ENCODE measurements at regions of chr3 and their contacts with region 1.

Region 1: GRCh38 chr3:141875374-141875892 is 1.0 kb upstream of the ATP1B3 start:
- DNase-seq: peak; percentile 66 to 89 (median 77)
- ATAC-seq: peak; percentile 59 to 67 (median 61)
- H3K4me3 ChIP-seq: peak overlapping the region; percentile 85 to 90
- H3K4me3 Mint-ChIP-seq: peak overlapping the region; percentile 83 to 95 (median 91)
- H3K27ac ChIP-seq: peak overlapping the region; percentile 93
- H3K27ac Mint-ChIP-seq: peak overlapping the region; percentile 86 to 96
- H3K4me1 ChIP-seq: peaks cover 9 to 10% of the 10 kb centered on the region in 2 experiments
- H3K4me1 Mint-ChIP-seq: peaks cover 32 to 34% (median 33%) of the 10 kb centered on the region in 3 donors
- H3K27me3 ChIP-seq: no peaks in the 10 kb centered on the region
- H3K27me3 Mint-ChIP-seq: no peaks in the 10 kb centered on the region

Region 2: GRCh38 chr3:141738022-141738890 is 137.2 kb before region 1 on chr3 and contains the start of gene RNF7:
- CTCF ChIA-PET with region 1: interaction called, 3 to 20 read pairs
- POLR2A ChIA-PET with region 1: interaction called, 3 to 12 read pairs
- DNase-seq: peak; percentile 90 to 99 (median 97)
- ATAC-seq: peak; percentile 89 to 99 (median 92)
- H3K4me3 ChIP-seq: peak within 1 kb of the TSS; percentile 97
- H3K4me3 Mint-ChIP-seq: peak within 1 kb of the TSS; percentile 95 to 99 (median 95)
- H3K27ac ChIP-seq: peak within 1 kb of the TSS; percentile 94
- H3K27ac Mint-ChIP-seq: peak within 1 kb of the TSS; percentile 96 to 98
- H3K4me1 ChIP-seq: peaks cover 17 to 18% of the 10 kb centered on the region in 2 experiments
- H3K4me1 Mint-ChIP-seq: peaks cover 40 to 52% (median 43%) of the 10 kb centered on the region in 3 donors
- H3K27me3 ChIP-seq: no peaks in the 10 kb centered on the region
- H3K27me3 Mint-ChIP-seq: no peaks in the 10 kb centered on the region
- total RNA-seq, gene RNF7: 53.5 to 61.2 (median 55.5) TPM

Region 3: GRCh38 chr3:141796081-141796888 is 79.1 kb before region 1 on chr3:
- CTCF ChIA-PET with region 1: interaction called, 4 to 16 read pairs
- POLR2A ChIA-PET with region 1: interaction called in 1 of 2 experiments, 3 read pairs
- DNase-seq: peak in 34 of 35 experiments; percentile 11 to 74 (median 37)
- ATAC-seq: peak; percentile 78 to 84 (median 79)
- H3K4me3 ChIP-seq: peak overlapping the region; percentile 54 to 70
- H3K4me3 Mint-ChIP-seq: peak overlapping the region; percentile 88 to 90 (median 89)
- H3K27ac ChIP-seq: peak overlapping the region; percentile 91
- H3K27ac Mint-ChIP-seq: peak overlapping the region; percentile 99 to 100
- H3K4me1 ChIP-seq: peaks cover 28 to 57% of the 10 kb centered on the region in 2 experiments
- H3K4me1 Mint-ChIP-seq: peaks cover 56 to 67% (median 57%) of the 10 kb centered on the region in 3 donors
- H3K27me3 ChIP-seq: no peaks in the 10 kb centered on the region
- H3K27me3 Mint-ChIP-seq: no peaks in the 10 kb centered on the region

Region 4: DNA sequence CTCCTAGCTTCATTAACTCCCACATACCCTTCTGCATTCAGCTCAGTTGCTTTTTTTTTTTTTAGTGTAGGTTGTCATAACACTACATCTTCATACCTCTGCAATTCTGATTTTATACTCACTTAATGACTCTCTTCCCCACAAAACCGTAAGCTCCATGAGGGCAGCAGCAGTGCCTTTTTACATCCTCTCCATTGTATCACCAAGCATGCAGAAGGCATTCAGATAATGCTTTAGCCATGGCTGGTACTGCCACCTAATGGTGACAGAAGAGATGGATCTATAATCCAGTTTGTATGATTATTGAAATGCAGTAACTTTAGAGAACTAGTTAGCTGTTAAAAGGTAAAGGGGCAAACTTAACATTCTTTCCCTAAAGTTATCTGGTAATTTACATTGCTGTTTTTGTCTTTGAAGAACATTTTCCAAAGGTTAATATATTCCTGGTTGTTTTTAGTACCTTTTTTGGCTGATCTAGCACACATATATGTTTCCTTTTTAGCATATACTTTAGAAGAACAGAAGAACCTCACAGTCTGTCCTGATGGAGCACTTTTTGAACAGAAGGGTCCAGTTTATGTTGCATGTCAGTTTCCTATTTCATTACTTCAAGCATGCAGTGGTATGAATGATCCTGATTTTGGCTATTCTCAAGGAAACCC is 37.8 kb after region 1 on chr3:
- CTCF ChIA-PET with region 1: interaction called, 10 to 11 read pairs
- POLR2A ChIA-PET with region 1: no interaction called
- DNase-seq: peak in 33 of 35 experiments; percentile 5 to 76 (median 42)
- ATAC-seq: peak; percentile 73 to 83 (median 80)
- H3K4me3 ChIP-seq: no peak overlapping the region
- H3K4me3 Mint-ChIP-seq: no peak overlapping the region
- H3K27ac ChIP-seq: no peak overlapping the region
- H3K27ac Mint-ChIP-seq: no peak overlapping the region
- H3K4me1 ChIP-seq: no peaks in the 10 kb centered on the region
- H3K4me1 Mint-ChIP-seq: peaks cover 0 to 2% (median 2%) of the 10 kb centered on the region in 3 donors
- H3K27me3 ChIP-seq: no peaks in the 10 kb centered on the region
- H3K27me3 Mint-ChIP-seq: no peaks in the 10 kb centered on the region

Region 5: DNA sequence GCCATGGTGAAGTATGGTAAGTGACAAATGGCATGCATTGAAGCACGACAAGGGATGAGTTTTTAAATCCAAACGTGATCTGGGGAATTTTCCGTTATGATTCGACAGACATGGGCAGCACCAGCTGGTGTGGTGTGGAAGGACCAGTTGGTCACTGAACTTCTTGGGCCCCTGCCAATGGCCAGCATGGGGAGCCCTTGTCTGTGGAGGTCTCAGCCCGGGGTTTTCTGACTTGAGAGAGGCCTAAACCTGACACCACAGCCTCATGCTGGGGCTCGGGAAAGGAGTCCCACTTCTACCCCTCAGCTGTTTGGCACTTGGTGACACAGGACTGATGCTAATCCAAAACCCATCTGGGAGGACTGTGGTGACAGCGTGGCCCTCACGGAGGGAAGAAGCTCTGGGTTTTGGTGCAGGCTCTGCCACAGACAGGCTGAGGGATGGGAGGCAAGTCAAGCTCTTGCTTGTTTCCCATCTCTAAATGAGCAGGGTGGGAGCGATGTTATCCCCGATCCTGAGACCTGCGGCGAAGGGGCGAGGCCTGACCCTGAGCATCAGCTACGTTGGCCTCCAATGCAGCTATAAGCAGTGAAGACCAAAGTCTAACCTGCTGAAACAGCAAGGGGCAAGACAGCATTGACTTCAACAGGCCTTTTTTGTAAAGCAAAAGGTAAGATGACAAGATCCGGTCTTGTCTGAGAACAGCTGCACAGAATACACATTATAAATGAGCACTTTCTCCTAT is 70.5 kb after region 1 on chr3:
- CTCF ChIA-PET with region 1: no interaction called
- POLR2A ChIA-PET with region 1: no interaction called
- DNase-seq: no peak
- ATAC-seq: no peak
- H3K4me3 ChIP-seq: no peak overlapping the region
- H3K4me3 Mint-ChIP-seq: no peak overlapping the region
- H3K27ac ChIP-seq: no peak overlapping the region
- H3K27ac Mint-ChIP-seq: no peak overlapping the region
- H3K4me1 ChIP-seq: no peaks in the 10 kb centered on the region
- H3K4me1 Mint-ChIP-seq: peaks cover 0 to 7% (median 2%) of the 10 kb centered on the region in 3 donors
- H3K27me3 ChIP-seq: no peaks in the 10 kb centered on the region
- H3K27me3 Mint-ChIP-seq: no peaks in the 10 kb centered on the region

Region 6: DNA sequence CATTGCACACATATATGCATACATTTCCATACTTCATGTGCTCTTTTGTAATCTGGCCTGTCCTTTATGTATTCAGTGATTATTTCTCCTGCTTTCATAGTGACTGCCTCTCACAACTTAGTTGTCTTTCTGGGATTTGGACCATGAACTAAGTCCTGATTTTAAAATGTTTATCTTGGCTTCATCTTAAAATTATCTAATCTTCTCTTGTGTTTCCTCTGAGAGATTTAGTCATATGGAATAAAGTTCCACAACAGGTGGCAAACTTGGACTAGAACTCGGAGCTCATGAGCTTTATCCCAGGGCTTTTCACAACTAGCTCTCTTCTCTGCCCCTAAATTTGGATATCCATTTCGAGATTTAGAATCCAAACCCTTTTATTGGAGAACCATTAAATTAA is 1170.2 kb after region 1 on chr3:
- CTCF ChIA-PET with region 1: no interaction called
- POLR2A ChIA-PET with region 1: interaction called in 1 of 2 experiments, 12 read pairs
- DNase-seq: no peak
- ATAC-seq: no peak
- H3K4me3 ChIP-seq: no peak overlapping the region
- H3K4me3 Mint-ChIP-seq: no peak overlapping the region
- H3K27ac ChIP-seq: no peak overlapping the region
- H3K27ac Mint-ChIP-seq: no peak overlapping the region
- H3K4me1 ChIP-seq: no peaks in the 10 kb centered on the region
- H3K4me1 Mint-ChIP-seq: no peaks in the 10 kb centered on the region
- H3K27me3 ChIP-seq: no peaks in the 10 kb centered on the region
- H3K27me3 Mint-ChIP-seq: no peaks in the 10 kb centered on the region